GM13976 (cell line): ENCODE measurements at regions of chr5 and their contacts with region 1.

Region 1: DNA sequence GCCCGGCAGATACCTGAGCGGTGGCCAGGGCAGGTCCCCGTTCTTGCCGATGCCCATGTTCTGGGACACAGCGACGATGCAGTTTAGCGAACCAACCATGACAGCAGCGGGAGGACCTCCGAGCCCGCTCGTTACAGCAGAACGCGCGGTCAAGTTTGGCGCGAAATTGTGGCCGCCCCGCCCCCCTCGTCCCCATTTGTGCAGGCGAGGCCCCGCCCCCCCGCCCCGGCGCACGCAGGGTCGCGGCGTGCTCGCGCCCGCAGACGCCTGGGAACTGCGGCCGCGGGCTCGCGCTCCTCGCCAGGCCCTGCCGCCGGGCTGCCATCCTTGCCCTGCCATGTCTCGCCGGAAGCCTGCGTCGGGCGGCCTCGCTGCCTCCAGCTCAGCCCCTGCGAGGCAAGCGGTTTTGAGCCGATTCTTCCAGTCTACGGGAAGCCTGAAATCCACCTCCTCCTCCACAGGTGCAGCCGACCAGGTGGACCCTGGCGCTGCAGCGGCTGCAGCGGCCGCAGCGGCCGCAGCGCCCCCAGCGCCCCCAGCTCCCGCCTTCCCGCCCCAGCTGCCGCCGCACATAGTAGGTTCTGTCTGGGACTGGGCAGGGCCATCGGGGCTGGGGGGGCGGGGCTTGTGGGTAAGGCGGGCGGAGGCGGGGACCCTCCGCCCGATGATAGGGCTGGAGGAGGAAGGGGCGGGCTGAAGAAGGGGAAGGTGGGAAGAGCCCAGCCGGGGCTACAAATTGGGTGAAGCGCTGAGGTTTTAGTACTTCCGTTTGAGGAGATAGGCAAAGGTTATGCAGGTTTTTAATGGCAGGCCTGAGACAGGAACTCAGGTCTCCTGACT is at the starts of genes DHFR and MSH3:
- DNase-seq: peak; percentile 94
- CTCF ChIP-seq: no peak

Region 2: GRCh38 chr5:80109646-80110478 is 544.7 kb before region 1 on chr5:
- in situ Hi-C with region 1: loop called (anchors 25 kb)
- DNase-seq: no peak
- CTCF ChIP-seq: no peak

Region 3: GRCh38 chr5:80487829-80488721 is 166.5 kb before region 1 on chr5 and contains the start of gene FAM151B:
- in situ Hi-C with region 1: loop called (anchors 25 kb)
- DNase-seq: peak; percentile 76
- CTCF ChIP-seq: no peak

Region 4: GRCh38 chr5:81125959-81126358 is 471.3 kb after region 1 on chr5:
- in situ Hi-C with region 1: no loop called
- DNase-seq: no peak
- CTCF ChIP-seq: no peak